ENCODE measurements at regions of chr5 and their contacts with region 1.

Region 1: DNA sequence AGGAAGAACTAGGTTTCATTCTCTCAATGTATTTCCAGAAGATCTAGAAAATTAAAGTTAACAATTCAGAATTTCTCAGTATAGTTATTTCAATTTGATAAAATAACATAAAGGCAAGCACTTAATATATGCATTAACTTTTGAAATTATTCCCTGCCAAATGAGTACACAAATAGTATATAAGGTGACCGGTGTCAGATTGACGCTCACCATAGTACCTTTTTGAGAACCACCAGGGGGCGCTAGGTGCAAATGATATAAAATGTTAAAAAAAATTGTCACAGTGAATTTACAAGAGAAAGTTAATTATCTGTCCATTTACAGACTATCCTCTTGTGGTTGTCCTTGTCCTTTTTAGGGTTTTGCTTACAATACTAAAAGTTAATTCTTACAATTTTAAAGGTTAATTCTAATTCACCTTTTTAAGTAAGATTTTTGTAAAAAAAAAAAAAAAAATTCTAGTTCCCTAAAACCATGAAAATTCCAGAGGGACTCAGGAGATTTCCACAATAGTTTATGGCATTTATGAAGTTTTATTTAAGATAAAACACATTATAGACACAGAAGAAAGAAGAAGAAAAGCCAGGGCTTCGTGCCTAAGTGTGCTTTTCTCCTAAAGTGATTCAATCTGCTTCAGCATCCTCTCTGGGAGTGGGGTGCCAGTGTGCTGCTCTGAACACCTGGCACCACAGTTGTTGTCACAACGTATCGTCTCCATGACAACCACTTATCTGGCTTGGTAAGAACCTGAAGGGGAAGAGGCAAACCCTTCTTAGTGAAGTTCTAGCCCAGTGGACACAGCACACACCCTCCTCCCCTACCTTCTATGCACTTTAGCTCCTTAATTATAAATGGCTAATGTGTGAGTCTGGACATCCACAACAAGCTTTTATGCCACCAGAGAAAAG is 1.7 kb downstream of the ADAMTS16 start:
- DNase-seq: peak; percentile 53
- H3K4me3 ChIP-seq: peak overlapping the region in 1 of 2 experiments; percentile 28; a peak in 1 of 4 replicates
- H3K27ac ChIP-seq: no peak overlapping the region
- H3K4me1 ChIP-seq: peaks cover 0 to 3% of the 10 kb centered on the region in 2 experiments; a peak in 1 of 4 replicates
- H3K27me3 ChIP-seq: peaks cover 26% of the 10 kb centered on the region
- CTCF ChIP-seq: peak; percentile 84
- EP300 ChIP-seq: no peak
- RAD21 ChIP-seq: peak; percentile 85

Region 2: DNA sequence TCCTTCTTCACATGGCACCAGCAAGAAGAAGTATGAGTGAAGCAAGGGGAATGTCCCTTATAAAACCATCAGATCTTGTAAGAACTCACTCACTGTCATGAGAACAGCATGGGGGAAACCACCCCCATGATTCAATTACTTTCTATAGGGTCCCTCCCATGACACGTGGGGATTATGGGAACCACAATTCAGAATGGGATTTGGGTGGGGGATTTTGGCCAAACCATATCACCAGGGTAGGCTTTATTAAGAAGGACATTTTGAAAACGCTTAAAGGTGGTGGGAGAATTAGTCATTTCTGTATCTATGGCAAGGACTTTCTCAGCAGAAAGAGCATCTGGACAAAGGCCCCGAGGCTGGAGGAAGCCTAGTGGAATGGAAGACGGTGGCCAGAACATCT is 102.0 kb before region 1 on chr5:
- CTCF ChIA-PET with region 1: no interaction called
- POLR2A ChIA-PET with region 1: no interaction called
- DNase-seq: no peak
- H3K4me3 ChIP-seq: no peak overlapping the region
- H3K27ac ChIP-seq: no peak overlapping the region
- H3K4me1 ChIP-seq: no peaks in the 10 kb centered on the region
- H3K27me3 ChIP-seq: no peaks in the 10 kb centered on the region
- CTCF ChIP-seq: no peak
- EP300 ChIP-seq: no peak
- RAD21 ChIP-seq: no peak

Region 3: DNA sequence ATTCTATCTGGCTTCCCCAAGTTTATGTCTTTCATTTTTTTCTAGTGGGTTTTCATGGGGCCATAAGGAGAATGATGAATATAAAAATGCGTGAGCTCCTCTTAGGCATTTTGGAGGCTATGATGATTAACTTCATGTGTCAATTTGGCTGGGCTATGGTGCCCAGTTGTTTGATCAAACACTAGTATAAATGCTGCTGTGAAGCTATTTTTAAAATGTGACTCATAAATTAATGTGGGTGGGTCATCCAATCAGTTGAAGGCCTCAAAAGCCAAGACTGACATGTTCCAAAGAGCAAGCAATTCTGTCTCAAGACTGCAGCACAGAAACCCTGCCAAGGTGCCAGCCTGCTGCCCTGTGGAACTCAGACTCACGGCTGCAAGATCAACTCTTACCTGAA is 256.2 kb after region 1 on chr5:
- CTCF ChIA-PET with region 1: interaction called, 34 read pairs
- POLR2A ChIA-PET with region 1: no interaction called
- DNase-seq: no peak
- H3K4me3 ChIP-seq: no peak overlapping the region
- H3K27ac ChIP-seq: no peak overlapping the region
- H3K4me1 ChIP-seq: no peaks in the 10 kb centered on the region
- H3K27me3 ChIP-seq: no peaks in the 10 kb centered on the region
- CTCF ChIP-seq: no peak
- EP300 ChIP-seq: no peak
- RAD21 ChIP-seq: no peak